T-cell (primary cell): ENCODE measurements at regions of chr7 and their contacts with region 1.

Region 1: DNA sequence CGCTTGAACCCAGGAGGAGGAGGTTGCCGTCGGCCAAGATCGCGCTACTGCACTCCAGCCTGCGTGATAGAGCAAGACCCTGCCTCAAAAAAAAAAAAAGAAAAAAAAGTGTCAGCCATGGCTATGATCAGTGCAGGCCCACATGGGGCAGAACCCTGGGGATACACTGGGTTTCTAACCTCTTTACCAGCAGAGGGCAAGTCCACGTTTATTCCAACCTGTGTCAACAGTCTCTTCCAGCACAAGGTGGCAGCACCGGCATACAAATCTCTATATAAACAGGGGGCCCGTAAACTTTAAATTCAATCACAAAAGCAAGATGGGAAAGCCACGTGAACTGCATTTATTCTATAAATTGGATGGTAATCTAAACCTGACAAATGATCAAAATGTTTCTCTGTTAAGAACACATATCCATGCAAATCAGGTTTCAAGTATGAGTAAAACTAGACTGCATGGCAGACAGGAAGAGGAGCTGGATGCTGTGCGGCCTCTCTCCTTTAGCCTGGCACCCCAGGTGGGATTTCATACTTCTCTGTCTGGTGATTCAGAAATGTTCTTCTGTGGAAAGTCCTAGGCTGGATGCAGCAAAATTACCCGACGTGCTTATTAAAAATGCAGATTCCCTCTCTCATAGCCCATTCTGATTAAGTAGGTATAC is 60.0 kb upstream of the STEAP1B start:
- DNase-seq: peak; percentile 19 to 79 (median 56)
- ATAC-seq: peak; percentile 62 to 94 (median 74)
- H3K4me3 ChIP-seq: no peak overlapping the region
- H3K4me3 Mint-ChIP-seq: no peak overlapping the region
- H3K27ac ChIP-seq: no peak overlapping the region
- H3K27ac Mint-ChIP-seq: no peak overlapping the region
- H3K4me1 ChIP-seq: peaks cover 3 to 22% of the 10 kb centered on the region in 2 experiments
- H3K4me1 Mint-ChIP-seq: peaks cover 27 to 34% (median 28%) of the 10 kb centered on the region in 3 donors
- H3K27me3 ChIP-seq: peaks cover 0 to 22% of the 10 kb centered on the region in 2 experiments
- H3K27me3 Mint-ChIP-seq: peaks cover 13 to 18% of the 10 kb centered on the region in 2 donors

Region 2: GRCh38 chr7:22589641-22590201 is 29.8 kb after region 1 on chr7:
- CTCF ChIA-PET with region 1: no interaction called
- POLR2A ChIA-PET with region 1: interaction called in 1 of 2 experiments, 20 read pairs
- DNase-seq: no peak
- ATAC-seq: no peak
- H3K4me3 ChIP-seq: no peak overlapping the region
- H3K4me3 Mint-ChIP-seq: no peak overlapping the region
- H3K27ac ChIP-seq: no peak overlapping the region
- H3K27ac Mint-ChIP-seq: no peak overlapping the region
- H3K4me1 ChIP-seq: no peaks in the 10 kb centered on the region
- H3K4me1 Mint-ChIP-seq: peaks cover 0 to 11% (median 6%) of the 10 kb centered on the region in 3 donors
- H3K27me3 ChIP-seq: no peaks in the 10 kb centered on the region
- H3K27me3 Mint-ChIP-seq: peaks cover 6 to 25% of the 10 kb centered on the region in 2 donors

Region 3: GRCh38 chr7:22726345-22727185 is 166.6 kb after region 1 on chr7:
- CTCF ChIA-PET with region 1: interaction called, 74 to 102 read pairs
- POLR2A ChIA-PET with region 1: no interaction called
- DNase-seq: peak in 33 of 35 experiments; percentile 4 to 69 (median 28)
- ATAC-seq: peak; percentile 76 to 90 (median 80)
- H3K4me3 ChIP-seq: no peak overlapping the region
- H3K4me3 Mint-ChIP-seq: peak overlapping the region; percentile 44 to 67 (median 65)
- H3K27ac ChIP-seq: no peak overlapping the region
- H3K27ac Mint-ChIP-seq: no peak overlapping the region
- H3K4me1 ChIP-seq: peaks cover 0 to 18% of the 10 kb centered on the region in 2 experiments
- H3K4me1 Mint-ChIP-seq: peaks cover 19 to 30% (median 21%) of the 10 kb centered on the region in 3 donors
- H3K27me3 ChIP-seq: peaks cover 0 to 21% of the 10 kb centered on the region in 2 experiments
- H3K27me3 Mint-ChIP-seq: peaks cover 13 to 15% of the 10 kb centered on the region in 2 donors

Region 4: GRCh38 chr7:22782616-22783232 is 222.8 kb after region 1 on chr7:
- CTCF ChIA-PET with region 1: interaction called, 19 to 29 read pairs
- POLR2A ChIA-PET with region 1: no interaction called
- DNase-seq: peak; percentile 8 to 77 (median 61)
- ATAC-seq: peak; percentile 65 to 79 (median 68)
- H3K4me3 ChIP-seq: no peak overlapping the region
- H3K4me3 Mint-ChIP-seq: no peak overlapping the region
- H3K27ac ChIP-seq: no peak overlapping the region
- H3K27ac Mint-ChIP-seq: no peak overlapping the region
- H3K4me1 ChIP-seq: no peaks in the 10 kb centered on the region
- H3K4me1 Mint-ChIP-seq: no peaks in the 10 kb centered on the region
- H3K27me3 ChIP-seq: no peaks in the 10 kb centered on the region
- H3K27me3 Mint-ChIP-seq: no peaks in the 10 kb centered on the region